ENCODE measurements at regions of chr2 and their contacts with region 1.

Region 1: GRCh38 chr2:166539340-166540162 is 45.5 kb upstream of the SCN7A start:
- DNase-seq: no peak
- ATAC-seq: peak; percentile 59

Region 2: DNA sequence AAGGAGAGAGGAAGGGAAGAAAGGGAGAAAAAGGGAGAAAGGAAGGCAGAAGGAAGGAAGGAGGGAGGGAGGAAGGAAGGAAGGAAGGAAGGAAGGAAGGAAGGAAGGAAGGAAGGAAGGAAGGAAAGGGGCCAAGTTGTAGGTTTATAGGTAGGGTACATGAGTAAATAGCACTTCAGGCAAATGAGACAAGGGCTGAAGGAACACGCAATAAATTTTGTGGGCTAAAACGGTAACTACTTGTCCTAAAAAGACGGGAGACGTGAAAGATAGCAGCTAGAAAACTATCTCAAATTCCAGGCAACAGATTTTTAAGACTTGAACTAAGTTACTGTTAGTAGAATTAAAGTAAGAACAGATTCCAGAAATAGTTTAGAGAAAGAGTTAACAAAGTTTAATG is 219.4 kb after region 1 on chr2:
- intact Hi-C with region 1: no loop called
- DNase-seq: no peak
- ATAC-seq: no peak

Region 3: GRCh38 chr2:167212014-167212648 is 672.6 kb after region 1 on chr2:
- intact Hi-C with region 1: loop called in 1 of 2 experiments (anchors 10 kb)
- DNase-seq: peak in 1 of 2 donors; percentile 16
- ATAC-seq: peak; percentile 54

Region 4: DNA sequence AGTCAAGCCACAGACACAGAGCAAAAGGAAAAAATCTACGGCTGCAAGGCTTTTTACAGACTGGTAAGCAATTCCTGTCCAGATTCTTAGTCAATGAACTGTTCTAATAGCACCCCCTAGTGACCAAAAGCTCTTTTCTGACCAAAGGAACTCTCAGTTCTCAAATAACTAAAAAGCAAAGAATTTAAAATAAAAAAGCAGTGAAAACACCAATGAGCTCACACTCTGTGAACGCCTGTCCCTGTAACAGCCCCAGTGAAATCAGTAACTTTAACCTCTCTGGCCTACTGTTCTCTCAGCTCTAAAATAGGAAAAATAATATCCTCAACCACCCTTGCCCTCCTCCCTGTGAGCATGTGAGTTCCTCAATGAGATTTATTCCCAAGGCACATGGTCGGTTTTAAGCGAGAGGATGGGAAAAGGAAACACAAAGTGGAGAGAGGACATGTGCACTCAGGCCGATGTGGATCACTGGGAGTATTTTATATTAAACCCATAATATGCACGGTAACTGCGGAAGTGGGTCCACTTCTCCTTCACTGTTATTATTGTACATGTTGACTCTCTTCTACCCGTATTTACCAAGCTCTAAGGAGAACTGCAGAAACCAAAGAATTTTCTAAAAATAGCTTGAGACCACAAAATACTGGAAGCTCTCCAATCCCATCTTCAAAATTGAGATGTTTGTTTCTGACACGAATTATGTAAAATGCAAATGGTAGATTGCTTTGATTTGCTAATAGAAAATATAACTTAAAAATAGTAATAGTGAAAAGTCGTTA is 1579.4 kb after region 1 on chr2:
- intact Hi-C with region 1: loop called in 1 of 2 experiments (anchors 10 kb)
- DNase-seq: no peak
- ATAC-seq: peak; percentile 75

Measured in left colon (tissue), 2 donors.